ENCODE measurements at regions of chr6 and their contacts with region 1.

Region 1: DNA sequence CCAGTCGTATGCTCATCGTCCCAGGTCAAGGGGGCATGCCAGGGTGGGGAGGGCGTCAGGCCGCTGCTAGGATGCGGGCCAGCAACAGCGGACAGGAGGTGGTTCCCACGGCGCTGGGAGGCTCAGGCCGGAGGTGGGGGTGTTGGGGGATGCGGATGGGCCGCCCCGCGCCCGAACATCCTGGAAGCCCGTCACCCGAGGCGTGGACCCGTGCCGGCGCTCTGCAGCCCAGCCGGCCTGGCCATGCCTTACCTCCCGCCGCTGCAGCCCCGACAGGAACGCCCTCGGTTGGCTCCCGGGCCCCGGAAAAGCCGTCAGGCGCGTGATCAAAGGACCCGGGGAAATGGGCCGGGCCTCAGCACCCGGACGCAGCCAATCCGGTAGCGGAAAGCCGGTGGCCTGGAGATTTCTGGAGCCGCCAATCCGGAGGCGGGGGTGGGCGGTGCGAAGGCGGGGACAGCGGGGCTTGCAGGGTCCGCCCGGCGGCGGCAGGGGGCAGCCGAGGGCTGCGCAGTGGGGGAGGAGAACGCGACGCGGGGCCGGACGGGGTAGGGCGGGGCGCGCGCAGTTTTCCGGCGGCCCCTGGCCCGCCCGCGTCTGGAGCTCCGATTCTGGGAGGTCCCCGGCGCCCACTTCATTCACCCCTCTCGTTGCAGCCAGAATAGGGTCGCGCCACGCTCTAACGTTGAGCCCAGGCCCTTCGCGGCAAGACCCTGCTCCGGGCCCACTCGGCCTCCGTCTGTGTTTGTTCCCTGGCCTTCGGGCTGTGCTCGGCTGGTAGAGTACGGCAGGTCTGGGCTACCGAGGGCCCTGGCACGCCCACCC is at the start of gene SMIM29:
- DNase-seq: peak; percentile 97 to 99 (median 98)
- H3K4me3 ChIP-seq: peak within 1 kb of the TSS; percentile 61 to 78 (median 73)
- H3K27ac ChIP-seq: peak within 1 kb of the TSS; percentile 83 to 91
- H3K4me1 ChIP-seq: peaks cover 0 to 10% (median 0%) of the 10 kb centered on the region in 3 donors
- H3K27me3 ChIP-seq: no peaks in the 10 kb centered on the region
- CTCF ChIP-seq: peak; percentile 89
- total RNA-seq, gene SMIM29: 22.6 TPM

Region 2: DNA sequence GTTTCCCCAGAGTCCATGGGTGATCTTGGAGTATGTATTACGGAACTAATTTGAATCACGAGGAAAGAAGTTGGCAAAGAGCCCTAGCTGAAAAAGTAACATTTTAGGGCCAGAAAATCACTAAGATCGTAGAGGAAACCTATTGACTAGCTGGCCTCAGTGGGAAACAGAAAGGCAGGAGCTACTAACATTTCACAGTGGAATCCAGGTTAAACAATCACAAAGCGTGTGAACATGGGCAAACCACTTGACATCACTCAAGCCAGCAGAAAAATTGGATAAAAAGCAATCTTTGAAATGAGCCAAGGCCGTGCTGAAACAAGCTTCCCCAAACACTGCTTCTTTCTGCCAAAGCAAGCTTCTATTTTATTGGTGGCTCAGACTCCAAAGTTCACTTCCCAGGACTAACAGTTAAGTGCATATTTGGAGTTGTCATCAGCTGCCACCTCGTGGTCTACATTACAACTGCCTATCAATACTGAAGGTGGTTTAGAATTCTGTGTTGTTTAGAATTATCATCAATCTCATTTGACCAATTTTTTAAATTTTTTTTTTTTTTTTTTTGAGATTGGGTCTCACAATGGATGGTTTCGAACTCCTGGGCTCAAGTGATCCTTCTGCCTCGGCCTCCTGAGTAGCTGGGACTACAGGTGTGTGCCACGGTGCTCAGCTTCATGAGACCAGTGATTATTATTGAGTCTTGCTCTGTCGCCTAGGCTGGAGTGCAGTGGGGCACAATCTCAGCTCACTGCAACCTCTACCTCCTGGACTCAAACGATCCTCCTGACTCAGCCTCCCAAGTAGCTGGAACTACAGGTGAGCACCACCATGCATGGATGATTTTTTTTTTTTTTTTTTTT is 166.3 kb after region 1 on chr6:
- intact Hi-C with region 1: loop called (anchors 10 kb)
- DNase-seq: peak in 2 of 5 donors; percentile 41 to 70
- H3K4me3 ChIP-seq: no peak overlapping the region
- H3K27ac ChIP-seq: peak overlapping the region; percentile 68 to 73
- H3K4me1 ChIP-seq: peaks cover 0 to 5% (median 5%) of the 10 kb centered on the region in 3 donors
- H3K27me3 ChIP-seq: no peaks in the 10 kb centered on the region
- CTCF ChIP-seq: peak; percentile 82

Measured in kidney (tissue), 22 donors.